Left cardiac atrium (tissue), 4 donors: ENCODE measurements at regions of chr1 and their contacts with region 1.

Region 1: GRCh38 chr1:32619701-32620485 is 30.5 kb downstream of the ZBTB8OS start:
- DNase-seq: no peak
- ATAC-seq: no peak

Region 2: GRCh38 chr1:32454726-32455125 is 165.2 kb before region 1 on chr1:
- intact Hi-C with region 1: loop called in 1 of 2 experiments (anchors 10 kb)
- DNase-seq: peak; percentile 68
- ATAC-seq: peak; percentile 30 to 39

Region 3: GRCh38 chr1:32568929-32569328 is 51.0 kb before region 1 on chr1:
- intact Hi-C with region 1: no loop called
- DNase-seq: no peak
- ATAC-seq: no peak